GM18951 (cell line): ENCODE measurements at regions of chr9 and their contacts with region 1.

Region 1: DNA sequence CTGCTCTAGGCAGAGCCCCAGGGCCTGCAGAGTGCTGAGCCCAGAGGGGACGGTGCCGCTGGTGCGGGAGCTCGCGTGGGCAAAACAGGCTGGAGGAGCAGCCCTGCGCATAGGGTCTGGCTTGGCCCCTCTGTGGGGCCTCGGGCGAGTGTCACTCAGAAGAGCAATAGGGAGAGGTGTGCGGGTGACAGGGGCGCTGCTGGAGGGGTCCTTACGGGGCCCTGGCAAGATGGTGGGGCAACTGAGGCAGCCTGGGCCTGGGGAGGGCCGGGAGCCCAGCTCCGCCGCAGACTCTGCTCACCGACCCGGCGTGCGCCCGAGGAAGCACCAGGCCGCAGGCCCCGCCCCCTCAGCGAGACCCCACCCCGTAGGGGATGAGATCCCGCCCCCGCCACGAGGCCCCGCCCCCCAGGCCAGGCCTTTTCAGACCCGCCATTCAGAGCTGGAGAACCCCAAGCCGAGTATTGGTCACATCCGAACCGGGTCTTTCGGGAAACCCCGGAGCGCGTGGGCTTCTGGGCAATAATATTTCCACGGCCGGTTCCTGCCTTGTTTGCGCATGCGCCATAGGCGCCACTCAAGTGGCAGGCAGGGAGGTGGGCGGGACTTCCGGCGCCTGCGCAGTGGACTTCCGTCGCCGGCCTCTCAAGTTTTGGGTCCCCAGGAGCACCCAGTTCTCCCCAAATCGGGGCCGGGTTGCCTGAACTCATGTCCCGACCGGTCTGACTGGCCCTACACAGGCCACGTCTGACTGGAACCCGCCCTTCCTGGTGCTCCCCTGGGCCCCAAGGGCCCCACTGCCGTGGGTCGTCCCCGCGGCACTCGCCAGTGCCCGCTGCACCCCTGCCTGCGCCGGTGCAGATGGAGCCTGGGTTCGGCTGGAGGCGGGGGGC is 1.3 kb upstream of the RNF208 start:
- POLR2A ChIP-seq: peak; percentile 86

Region 2: DNA sequence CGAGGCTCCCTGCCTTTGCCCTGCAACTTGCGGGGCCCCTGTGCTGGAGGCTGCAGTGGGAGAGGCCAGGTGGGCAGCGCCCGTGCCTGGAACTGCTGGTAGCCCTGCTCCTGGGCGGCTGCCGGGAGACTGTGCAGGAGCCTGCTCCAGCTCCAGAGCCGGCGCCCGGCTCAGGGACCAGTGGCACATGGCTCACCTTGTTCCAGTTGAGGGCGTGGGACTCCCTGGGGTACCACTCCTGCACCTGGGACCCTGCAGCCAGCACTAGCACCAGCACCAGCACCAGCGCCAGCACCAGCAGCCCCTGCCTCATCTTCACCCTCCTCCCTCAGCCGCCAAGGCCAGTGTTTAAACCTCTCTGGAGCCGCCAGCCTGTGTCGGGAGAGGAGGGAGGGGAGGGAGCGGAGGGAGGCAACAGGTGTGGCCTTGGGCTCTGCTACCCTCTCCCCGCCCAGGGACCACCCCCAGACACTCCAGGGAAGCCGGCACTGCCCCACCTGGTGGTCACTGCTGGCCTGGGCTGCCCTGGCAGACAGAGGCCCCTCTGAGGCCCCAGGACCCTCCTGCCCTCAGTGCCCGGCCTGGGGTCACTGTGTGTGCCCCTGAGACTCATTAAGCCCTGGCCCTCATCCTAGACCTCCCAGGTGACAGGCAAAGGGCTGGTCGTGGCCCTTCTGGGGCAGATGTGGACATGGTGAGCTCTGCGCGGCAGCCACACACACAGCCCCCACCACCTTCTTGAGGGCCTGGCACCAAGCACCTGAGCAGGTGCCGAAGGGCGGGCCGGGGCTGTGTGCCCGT is 480.5 kb before region 1 on chr9 and contains the start of gene LCN10:
- in situ Hi-C with region 1: no loop called
- POLR2A ChIP-seq: no peak

Region 3: GRCh38 chr9:137029058-137029936 is 194.0 kb before region 1 on chr9:
- in situ Hi-C with region 1: no loop called
- POLR2A ChIP-seq: peak; percentile 8

Region 4: GRCh38 chr9:137129456-137130175 is 93.7 kb before region 1 on chr9:
- in situ Hi-C with region 1: loop called (anchors 10 kb)
- POLR2A ChIP-seq: peak; percentile 89